AG04450 (cell line): ENCODE measurements at regions of chr15 and their contacts with region 1.

Region 1: DNA sequence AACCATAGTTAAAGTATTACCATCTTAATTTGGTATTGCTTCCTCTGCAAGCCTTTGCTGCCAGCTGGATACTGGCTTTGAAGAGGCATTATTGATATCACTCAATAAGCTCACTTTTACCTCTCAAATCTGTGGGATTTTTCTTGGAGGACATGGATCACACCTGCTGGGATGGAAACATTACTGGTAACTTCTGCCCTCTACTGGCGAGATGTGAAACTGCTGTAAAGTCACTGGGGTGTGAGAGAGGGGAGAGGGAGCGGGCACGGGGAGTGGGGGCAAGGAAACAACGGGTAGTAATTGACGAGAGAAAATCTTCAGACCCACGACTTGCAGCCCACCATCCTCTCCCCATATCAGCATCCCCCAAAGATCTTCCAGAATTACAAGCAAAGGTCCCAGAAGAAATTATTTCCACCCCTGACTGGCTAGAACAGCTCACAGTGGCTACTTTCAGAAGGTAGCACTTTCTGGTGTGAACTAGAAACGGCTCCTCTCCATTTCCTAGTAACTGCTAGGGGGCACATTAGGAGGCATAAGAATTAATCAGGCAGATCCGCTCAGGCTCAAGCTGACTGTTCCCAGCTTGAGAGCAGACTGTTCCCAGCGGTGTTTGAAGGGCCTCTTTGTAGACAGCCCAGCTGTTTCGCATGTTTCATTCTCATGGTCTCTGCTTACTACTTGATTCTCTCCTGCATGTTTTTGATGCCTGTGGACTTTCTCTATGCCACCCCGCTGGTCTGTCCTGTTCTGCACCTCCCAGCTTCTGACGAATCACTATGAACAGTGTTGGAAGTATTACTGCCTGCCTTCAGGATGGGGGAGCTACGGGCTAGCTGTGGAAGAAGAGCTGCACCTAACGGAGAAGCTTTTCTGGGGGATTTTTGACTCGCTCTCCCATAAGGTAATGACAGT is 230.4 kb upstream of the CHRM5 start:
- DNase-seq: no peak
- H3K4me3 ChIP-seq: no peak overlapping the region
- H3K27ac ChIP-seq: no peak overlapping the region
- H3K27me3 ChIP-seq: peaks cover 18% of the 10 kb centered on the region
- CTCF ChIP-seq: peak; percentile 88

Region 2: GRCh38 chr15:33292717-33293307 is 445.1 kb before region 1 on chr15:
- CTCF ChIA-PET with region 1: interaction called, 33 read pairs
- POLR2A ChIA-PET with region 1: no interaction called
- DNase-seq: peak; percentile 10
- H3K4me3 ChIP-seq: no peak overlapping the region
- H3K27ac ChIP-seq: no peak overlapping the region
- H3K27me3 ChIP-seq: peaks cover 7% of the 10 kb centered on the region
- CTCF ChIP-seq: peak; percentile 70

Region 3: GRCh38 chr15:33600212-33600611 is 137.7 kb before region 1 on chr15:
- CTCF ChIA-PET with region 1: no interaction called
- POLR2A ChIA-PET with region 1: no interaction called
- DNase-seq: no peak
- H3K4me3 ChIP-seq: no peak overlapping the region
- H3K27ac ChIP-seq: no peak overlapping the region
- H3K27me3 ChIP-seq: no peaks in the 10 kb centered on the region
- CTCF ChIP-seq: no peak

Region 4: DNA sequence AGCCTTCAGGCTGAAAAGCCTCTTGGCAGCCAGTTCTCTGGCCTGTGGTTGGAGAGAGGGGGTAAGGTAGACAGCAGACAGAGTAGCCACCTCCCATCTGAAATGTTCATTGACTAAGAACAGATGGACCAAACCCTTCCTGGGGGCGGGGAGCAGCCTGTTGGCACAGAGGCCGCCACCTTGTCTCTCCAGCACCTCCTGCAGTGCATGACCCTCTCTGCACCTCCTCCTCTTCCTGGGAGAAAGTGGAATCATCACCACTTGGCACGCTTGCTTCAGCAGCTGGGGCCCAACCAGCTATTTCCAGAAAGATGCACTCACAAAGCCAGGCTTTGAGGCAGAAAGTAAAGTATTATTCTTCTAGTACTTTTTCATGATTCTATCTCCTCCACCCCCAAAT is 83.1 kb before region 1 on chr15:
- CTCF ChIA-PET with region 1: no interaction called
- POLR2A ChIA-PET with region 1: no interaction called
- DNase-seq: no peak
- H3K4me3 ChIP-seq: no peak overlapping the region
- H3K27ac ChIP-seq: no peak overlapping the region
- H3K27me3 ChIP-seq: no peaks in the 10 kb centered on the region
- CTCF ChIP-seq: no peak

Region 5: GRCh38 chr15:33706173-33706572 is 31.8 kb before region 1 on chr15:
- CTCF ChIA-PET with region 1: interaction called, 10 read pairs
- POLR2A ChIA-PET with region 1: no interaction called
- DNase-seq: no peak
- H3K4me3 ChIP-seq: no peak overlapping the region
- H3K27ac ChIP-seq: no peak overlapping the region
- H3K27me3 ChIP-seq: no peaks in the 10 kb centered on the region
- CTCF ChIP-seq: no peak

Region 6: GRCh38 chr15:33722005-33722672 is 15.8 kb before region 1 on chr15:
- CTCF ChIA-PET with region 1: interaction called, 28 read pairs
- POLR2A ChIA-PET with region 1: no interaction called
- DNase-seq: no peak
- H3K4me3 ChIP-seq: no peak overlapping the region
- H3K27ac ChIP-seq: no peak overlapping the region
- H3K27me3 ChIP-seq: no peaks in the 10 kb centered on the region
- CTCF ChIP-seq: no peak

Region 7: GRCh38 chr15:33963831-33964664 is 226.1 kb after region 1 on chr15:
- CTCF ChIA-PET with region 1: interaction called, 73 read pairs
- POLR2A ChIA-PET with region 1: no interaction called
- DNase-seq: no peak
- H3K4me3 ChIP-seq: no peak overlapping the region
- H3K27ac ChIP-seq: no peak overlapping the region
- H3K27me3 ChIP-seq: no peaks in the 10 kb centered on the region
- CTCF ChIP-seq: peak; percentile 84

Region 8: DNA sequence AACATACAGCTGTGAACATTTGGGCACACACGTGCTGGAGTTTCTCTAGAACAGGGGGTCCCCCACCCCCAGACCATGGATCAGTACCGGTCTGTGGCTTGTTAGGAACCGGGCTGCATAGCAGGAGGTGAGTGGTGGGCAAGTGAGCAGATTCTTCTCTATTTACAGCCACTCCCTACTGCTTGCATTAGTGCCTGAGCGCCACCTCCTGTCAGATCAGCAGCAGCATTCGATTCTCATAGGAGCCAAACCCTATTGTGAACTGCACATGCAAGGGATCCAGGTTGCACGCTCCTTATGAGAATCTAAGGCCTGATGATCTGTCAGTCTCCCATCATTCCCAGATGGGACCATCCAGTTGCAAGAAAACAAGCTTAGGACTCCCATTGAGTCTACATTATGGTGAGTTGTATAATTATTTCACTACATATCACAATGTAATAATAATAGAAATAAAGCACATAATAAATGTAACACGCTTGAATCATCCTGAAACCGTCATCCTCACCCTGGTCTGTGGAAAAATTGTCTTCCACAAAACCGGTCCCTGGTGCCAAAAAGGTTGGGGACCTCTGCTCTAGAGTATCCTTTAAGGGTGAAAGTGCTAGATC is 256.2 kb after region 1 on chr15:
- CTCF ChIA-PET with region 1: interaction called, 98 read pairs
- POLR2A ChIA-PET with region 1: no interaction called
- DNase-seq: no peak
- H3K4me3 ChIP-seq: no peak overlapping the region
- H3K27ac ChIP-seq: no peak overlapping the region
- H3K27me3 ChIP-seq: no peaks in the 10 kb centered on the region
- CTCF ChIP-seq: peak; percentile 62